ENCODE measurements at regions of chr4 and their contacts with region 1.

Region 1: DNA sequence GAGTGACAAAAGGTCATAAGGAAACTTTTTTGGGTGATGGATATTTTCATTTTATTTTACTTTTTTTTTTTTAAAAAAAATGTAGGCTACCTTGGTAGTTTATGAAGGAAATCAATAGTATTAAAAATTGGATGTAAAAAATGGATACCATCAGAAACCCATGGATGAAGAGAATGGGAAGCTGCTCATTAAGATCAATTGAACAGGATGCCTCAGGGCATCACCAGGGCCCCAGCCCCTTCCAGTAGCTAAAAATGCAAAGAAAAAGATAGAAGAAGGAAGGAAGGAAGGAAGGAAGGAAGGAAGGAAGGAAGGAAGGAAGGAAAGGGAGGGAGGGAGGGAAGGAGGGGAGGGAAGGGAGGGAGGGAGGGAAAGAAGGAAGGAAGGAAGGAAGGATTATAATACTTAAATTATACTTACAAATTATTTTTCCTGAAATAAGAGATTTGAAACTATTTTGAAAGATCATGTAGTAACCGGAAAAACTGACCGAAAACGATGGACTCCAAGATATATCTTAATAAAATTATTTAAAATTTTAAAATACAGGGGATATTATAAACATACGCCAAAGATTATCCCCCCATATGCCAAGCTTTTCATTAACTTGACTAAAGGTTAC is 24.1 kb downstream of the OSTC start:
- DNase-seq: no peak
- CTCF ChIP-seq: no peak

Region 2: GRCh38 chr4:108685036-108685686 is 10.7 kb after region 1 on chr4:
- CTCF ChIA-PET with region 1: interaction called, 42 read pairs
- POLR2A ChIA-PET with region 1: no interaction called
- DNase-seq: no peak
- CTCF ChIP-seq: no peak